Thyroid gland (tissue), 4 donors: ENCODE measurements at regions of chr16 and their contacts with region 1.

Region 1: GRCh38 chr16:68503334-68503733 is 35.8 kb upstream of the ZFP90 start:
- DNase-seq: no peak
- H3K4me3 ChIP-seq: no peak overlapping the region
- H3K27ac ChIP-seq: no peak overlapping the region
- H3K4me1 ChIP-seq: no peaks in the 10 kb centered on the region
- H3K27me3 ChIP-seq: no peaks in the 10 kb centered on the region
- CTCF ChIP-seq: no peak
- POLR2A ChIP-seq: no peak

Region 2: GRCh38 chr16:68396481-68396880 is 106.9 kb before region 1 on chr16:
- intact Hi-C with region 1: loop called (anchors 5 kb)
- DNase-seq: peak; percentile 55 to 57
- H3K4me3 ChIP-seq: no peak overlapping the region
- H3K27ac ChIP-seq: no peak overlapping the region
- H3K4me1 ChIP-seq: no peaks in the 10 kb centered on the region
- H3K27me3 ChIP-seq: no peaks in the 10 kb centered on the region
- CTCF ChIP-seq: peak; percentile 40 to 73 (median 68)
- POLR2A ChIP-seq: no peak

Region 3: DNA sequence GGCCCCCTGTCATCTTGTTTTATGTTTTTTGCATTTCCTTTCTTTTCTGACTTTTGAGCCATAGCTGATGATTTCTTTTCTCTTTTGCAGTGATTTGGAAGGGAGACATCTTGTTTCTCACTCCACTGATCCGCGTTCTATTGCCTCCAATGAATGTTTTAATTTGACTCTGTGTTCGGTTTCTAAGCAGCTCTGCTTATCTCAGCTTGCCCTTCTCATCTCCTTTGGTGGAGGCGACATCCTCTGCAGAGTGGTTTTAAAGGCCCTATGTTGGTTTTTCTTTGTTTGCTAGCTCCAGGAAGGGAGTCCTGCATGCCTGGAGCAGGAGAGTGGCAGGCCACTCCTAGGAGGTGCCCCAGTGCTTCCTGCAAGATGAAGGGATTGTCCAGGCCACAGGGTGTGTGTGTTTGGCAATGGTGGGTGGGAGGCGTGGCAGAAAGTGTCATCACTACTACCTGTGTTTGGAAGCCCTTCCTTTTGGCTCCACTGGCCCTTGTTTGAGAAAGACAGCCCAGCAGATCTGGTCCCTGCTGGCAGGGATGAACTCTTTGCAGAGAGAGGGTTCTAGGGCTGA is 68.6 kb before region 1 on chr16:
- intact Hi-C with region 1: no loop called
- DNase-seq: no peak
- H3K4me3 ChIP-seq: no peak overlapping the region
- H3K27ac ChIP-seq: no peak overlapping the region
- H3K4me1 ChIP-seq: no peaks in the 10 kb centered on the region
- H3K27me3 ChIP-seq: no peaks in the 10 kb centered on the region
- CTCF ChIP-seq: no peak
- POLR2A ChIP-seq: no peak